Posterior cingulate gyrus (tissue), 11 donors: ENCODE measurements at regions of chr1 and their contacts with region 1.

Region 1: GRCh38 chr1:156146020-156146768 is 7.2 kb upstream of the SEMA4A start:
- DNase-seq: peak in 3 of 10 donors; percentile 1 to 92 (median 34)

Region 2: GRCh38 chr1:155934097-155934935 is 211.9 kb before region 1 on chr1 and contains the start of gene KHDC4:
- intact Hi-C with region 1: no loop called
- DNase-seq: peak; percentile 91 to 99 (median 96)

Region 3: GRCh38 chr1:156193488-156194299 is 47.5 kb after region 1 on chr1 and contains the start of gene SLC25A44:
- intact Hi-C with region 1: loop called (anchors 5 kb)
- DNase-seq: peak; percentile 95 to 99 (median 96)

Region 4: DNA sequence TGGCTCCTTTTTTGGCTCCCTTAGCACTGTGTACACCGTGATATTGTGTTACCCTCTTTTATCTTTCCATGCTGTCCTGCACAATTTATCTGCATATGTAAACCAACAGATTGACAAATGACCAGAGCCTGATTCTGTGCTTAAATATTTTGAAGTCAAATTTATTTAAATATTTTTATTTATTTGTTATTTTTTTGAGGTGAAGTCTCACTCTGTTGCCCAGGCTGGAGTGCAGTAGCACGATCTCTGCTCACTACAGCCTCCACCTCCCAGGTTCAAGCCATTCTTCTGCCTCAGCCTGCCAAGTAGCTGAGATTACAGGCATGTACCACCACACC is 79.5 kb after region 1 on chr1:
- intact Hi-C with region 1: loop called (anchors 1 kb)
- DNase-seq: no peak